HepG2 (cell line): ENCODE measurements at regions of chr2 and their contacts with region 1.

Region 1: GRCh38 chr2:85707304-85707703 is 13.1 kb downstream of the GNLY start:
- DNase-seq: peak; percentile 73
- ATAC-seq: peak; percentile 81
- H3K4me3 ChIP-seq: no peak overlapping the region
- H3K27ac ChIP-seq: no peak overlapping the region
- H3K4me1 ChIP-seq: peaks cover 11% of the 10 kb centered on the region
- H3K27me3 ChIP-seq: peaks cover 12 to 37% of the 10 kb centered on the region in 2 experiments; a peak in 4 of 5 replicates
- CTCF ChIP-seq: peak; percentile 92
- EP300 ChIP-seq: no peak
- POLR2A ChIP-seq: no peak
- RAD21 ChIP-seq: no peak

Region 2: DNA sequence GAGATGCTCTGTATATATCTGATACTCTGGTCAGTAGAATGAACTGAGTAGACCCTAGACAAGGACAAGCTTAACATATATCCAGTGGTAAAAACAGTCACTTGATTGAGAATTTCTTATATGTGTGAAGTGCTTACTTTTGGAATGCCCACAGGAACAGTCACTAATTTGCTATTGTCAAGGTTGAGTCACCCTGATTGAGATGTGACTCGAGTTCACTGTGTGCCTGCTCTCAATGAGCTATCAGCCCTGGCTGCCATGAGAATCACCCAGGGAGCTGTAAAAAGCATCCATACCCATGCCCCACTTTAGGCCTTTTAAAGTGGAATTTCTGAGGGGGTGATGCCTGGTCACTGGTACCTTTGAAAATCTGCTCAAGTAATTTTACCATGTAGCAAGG is 1532.0 kb before region 1 on chr2:
- CTCF ChIA-PET with region 1: no interaction called
- POLR2A ChIA-PET with region 1: no interaction called
- in situ Hi-C with region 1: no loop called
- intact Hi-C with region 1: no loop called
- DNase-seq: no peak
- ATAC-seq: no peak
- H3K4me3 ChIP-seq: no peak overlapping the region
- H3K27ac ChIP-seq: no peak overlapping the region
- H3K4me1 ChIP-seq: 0 out of 2 replicates have a peak, but pooled peaks cover 10% of the 10 kb centered on the region
- H3K27me3 ChIP-seq: 0 out of 5 replicates have a peak, but pooled peaks cover 0 to 2% of the 10 kb centered on the region in 2 experiments
- CTCF ChIP-seq: no peak
- EP300 ChIP-seq: no peak
- POLR2A ChIP-seq: no peak
- RAD21 ChIP-seq: no peak

Region 3: GRCh38 chr2:85642725-85643124 is 64.6 kb before region 1 on chr2:
- CTCF ChIA-PET with region 1: interaction called, 4 read pairs
- POLR2A ChIA-PET with region 1: no interaction called
- in situ Hi-C with region 1: no loop called
- intact Hi-C with region 1: loop called (anchors 1 kb)
- DNase-seq: no peak
- ATAC-seq: no peak
- H3K4me3 ChIP-seq: no peak overlapping the region
- H3K27ac ChIP-seq: no peak overlapping the region
- H3K4me1 ChIP-seq: no peaks in the 10 kb centered on the region
- H3K27me3 ChIP-seq: no peaks in the 10 kb centered on the region
- CTCF ChIP-seq: no peak
- EP300 ChIP-seq: no peak
- POLR2A ChIP-seq: no peak
- RAD21 ChIP-seq: no peak

Region 4: DNA sequence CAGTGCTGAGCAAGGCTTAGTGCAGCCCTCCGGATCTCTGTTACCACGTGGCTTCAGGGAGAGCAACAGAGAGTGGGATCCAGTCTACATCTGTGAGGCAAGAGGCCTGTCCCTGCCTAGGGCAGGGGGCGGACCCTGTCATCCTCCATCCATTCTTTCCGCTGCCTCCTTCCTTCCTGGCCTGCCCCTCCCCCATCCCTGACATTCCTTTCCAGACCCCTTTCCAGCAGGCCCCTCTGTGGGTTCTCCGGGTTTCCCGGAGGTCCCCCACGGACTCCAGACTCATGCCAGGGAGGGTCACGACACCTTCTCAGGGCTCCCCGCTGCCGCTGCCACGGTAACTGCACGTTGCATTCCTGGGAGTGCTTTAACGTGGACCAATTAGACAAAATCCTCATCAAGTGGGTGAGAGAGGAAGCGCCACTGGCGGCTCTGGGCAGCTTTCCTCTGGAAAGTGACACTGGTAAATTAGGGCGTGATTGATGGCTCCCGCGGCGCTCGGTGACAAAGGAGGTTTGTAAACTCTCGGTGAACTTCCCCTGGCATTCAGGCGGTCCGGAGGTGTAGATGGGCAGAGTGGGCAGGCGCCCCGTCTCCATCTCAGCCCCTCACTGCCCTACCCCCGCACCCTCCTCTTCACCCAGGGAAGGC is 57.9 kb after region 1 on chr2:
- CTCF ChIA-PET with region 1: no interaction called
- POLR2A ChIA-PET with region 1: no interaction called
- in situ Hi-C with region 1: no loop called
- intact Hi-C with region 1: no loop called
- DNase-seq: no peak
- ATAC-seq: no peak
- H3K4me3 ChIP-seq: no peak overlapping the region
- H3K27ac ChIP-seq: no peak overlapping the region
- H3K4me1 ChIP-seq: peaks cover 62% of the 10 kb centered on the region
- H3K27me3 ChIP-seq: no peaks in the 10 kb centered on the region
- CTCF ChIP-seq: no peak
- EP300 ChIP-seq: no peak
- POLR2A ChIP-seq: no peak
- RAD21 ChIP-seq: no peak